ENCODE measurements at regions of chr2 and their contacts with region 1.

Region 1: DNA sequence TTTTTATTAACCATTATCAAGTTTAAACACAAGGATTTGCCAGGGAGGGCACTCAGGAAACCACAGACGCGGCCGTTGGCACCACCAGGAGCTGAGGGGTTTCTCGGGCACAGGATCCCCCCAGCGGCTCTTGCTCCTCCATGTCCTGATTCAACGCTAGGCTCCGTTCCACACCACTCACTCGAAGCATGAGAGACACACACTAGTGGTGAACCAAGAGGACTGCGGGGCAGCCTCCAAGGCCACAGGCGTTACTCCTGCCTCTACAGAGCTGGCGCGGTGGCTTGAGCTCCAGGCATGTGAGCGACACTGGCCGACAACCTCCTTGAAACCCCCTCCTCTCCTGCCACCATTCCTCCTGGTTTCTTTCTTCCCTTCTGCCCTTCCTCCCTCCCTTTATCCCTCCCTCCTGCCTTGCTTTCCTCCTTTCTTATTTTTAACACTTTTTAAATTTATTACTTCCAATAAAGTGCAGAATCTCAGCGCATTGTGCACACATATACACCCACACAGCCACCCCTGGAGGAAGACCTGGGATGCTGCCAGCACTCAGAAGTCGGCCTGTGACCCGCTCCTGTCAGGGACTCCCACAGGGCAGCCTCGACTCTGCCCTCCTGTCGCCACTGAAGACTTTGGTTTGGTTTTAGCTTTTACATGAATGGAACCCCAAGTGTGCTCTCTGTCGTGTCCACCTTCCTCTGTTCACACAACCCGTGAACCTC is 21.7 kb downstream of the COX7A2L start:
- DNase-seq: no peak
- ATAC-seq: peak; percentile 62
- H3K4me3 ChIP-seq: no peak overlapping the region
- H3K27ac ChIP-seq: no peak overlapping the region
- H3K4me1 ChIP-seq: peaks cover 13% of the 10 kb centered on the region
- H3K27me3 ChIP-seq: no peaks in the 10 kb centered on the region
- CTCF ChIP-seq: no peak

Region 2: DNA sequence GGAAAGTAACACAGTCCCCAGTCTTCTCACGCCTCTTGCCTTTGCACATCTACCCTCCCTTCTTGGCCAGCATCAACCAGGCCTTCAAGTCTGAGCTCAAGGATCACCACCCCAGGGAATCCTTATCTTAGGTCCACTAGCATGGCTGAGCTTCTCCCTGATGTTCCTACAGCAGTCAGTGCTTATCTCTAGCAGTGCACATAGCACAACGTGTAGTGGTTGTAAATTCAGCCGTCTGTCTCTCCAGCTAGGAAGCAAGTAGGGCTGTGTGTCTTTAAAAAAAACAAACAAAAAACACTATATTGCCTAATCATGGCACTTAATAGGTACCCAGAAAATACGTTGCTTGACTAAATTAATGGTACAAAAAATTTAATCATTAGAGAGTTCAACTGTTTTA is 125.3 kb after region 1 on chr2:
- CTCF ChIA-PET with region 1: no interaction called
- POLR2A ChIA-PET with region 1: no interaction called
- in situ Hi-C with region 1: no loop called
- intact Hi-C with region 1: no loop called
- DNase-seq: no peak
- ATAC-seq: no peak
- H3K4me3 ChIP-seq: no peak overlapping the region
- H3K27ac ChIP-seq: no peak overlapping the region
- H3K4me1 ChIP-seq: no peaks in the 10 kb centered on the region
- H3K27me3 ChIP-seq: no peaks in the 10 kb centered on the region
- CTCF ChIP-seq: no peak

Region 3: DNA sequence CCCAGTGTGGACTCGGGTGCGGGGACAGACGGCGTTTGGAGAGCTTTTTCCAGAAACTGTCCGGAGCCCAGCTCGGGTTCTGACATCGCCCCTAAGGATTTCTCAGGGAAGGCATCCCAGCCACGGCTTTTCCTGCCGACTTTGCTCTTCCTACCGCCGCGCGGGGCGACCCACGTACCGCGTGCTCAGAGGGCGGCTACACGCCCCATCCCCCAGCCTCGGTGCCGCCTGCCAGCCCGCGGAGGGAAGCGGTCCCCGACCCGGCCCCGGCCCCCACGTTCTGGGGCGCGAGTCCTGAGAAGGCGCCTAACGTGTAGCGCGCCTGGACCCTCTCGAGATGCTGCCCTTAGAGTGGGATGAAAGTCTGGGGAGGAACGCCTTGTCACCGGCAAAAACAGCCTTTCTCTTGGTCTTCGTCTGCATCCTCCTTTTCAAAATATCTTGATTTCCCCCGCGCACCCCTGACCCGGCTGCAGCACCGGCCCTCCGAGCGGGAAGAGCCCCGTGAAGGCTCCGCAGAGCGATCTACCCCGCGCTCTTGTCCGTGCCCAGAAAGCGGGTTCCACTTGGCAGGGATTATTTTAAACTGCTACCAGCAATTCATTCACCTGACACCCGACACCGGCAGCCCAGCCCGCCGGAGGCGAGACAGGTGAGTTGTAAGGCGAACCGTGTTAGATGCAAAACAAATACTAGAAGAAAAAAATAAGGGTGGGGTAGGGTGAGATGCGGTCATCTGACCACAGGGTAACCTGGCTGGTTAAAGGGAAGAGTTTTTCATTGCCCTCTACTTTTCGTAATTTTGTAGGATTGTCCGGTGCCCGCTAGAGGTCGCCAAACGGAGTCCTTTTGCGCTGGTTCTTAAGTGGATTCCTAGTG is 155.2 kb after region 1 on chr2:
- CTCF ChIA-PET with region 1: no interaction called
- POLR2A ChIA-PET with region 1: interaction called, 13 read pairs
- in situ Hi-C with region 1: no loop called
- intact Hi-C with region 1: no loop called
- DNase-seq: peak; percentile 83
- ATAC-seq: peak; percentile 73
- H3K4me3 ChIP-seq: peak overlapping the region; percentile 93 to 94
- H3K27ac ChIP-seq: peak overlapping the region; percentile 83
- H3K4me1 ChIP-seq: peaks cover 24% of the 10 kb centered on the region
- H3K27me3 ChIP-seq: no peaks in the 10 kb centered on the region
- CTCF ChIP-seq: peak; percentile 94